Posterior cingulate gyrus (tissue), 11 donors: ENCODE measurements at regions of chr17 and their contacts with region 1.

Region 1: GRCh38 chr17:39754161-39754951 is 16.6 kb downstream of the GRB7 start:
- DNase-seq: peak; percentile 73 to 98 (median 86)

Region 2: DNA sequence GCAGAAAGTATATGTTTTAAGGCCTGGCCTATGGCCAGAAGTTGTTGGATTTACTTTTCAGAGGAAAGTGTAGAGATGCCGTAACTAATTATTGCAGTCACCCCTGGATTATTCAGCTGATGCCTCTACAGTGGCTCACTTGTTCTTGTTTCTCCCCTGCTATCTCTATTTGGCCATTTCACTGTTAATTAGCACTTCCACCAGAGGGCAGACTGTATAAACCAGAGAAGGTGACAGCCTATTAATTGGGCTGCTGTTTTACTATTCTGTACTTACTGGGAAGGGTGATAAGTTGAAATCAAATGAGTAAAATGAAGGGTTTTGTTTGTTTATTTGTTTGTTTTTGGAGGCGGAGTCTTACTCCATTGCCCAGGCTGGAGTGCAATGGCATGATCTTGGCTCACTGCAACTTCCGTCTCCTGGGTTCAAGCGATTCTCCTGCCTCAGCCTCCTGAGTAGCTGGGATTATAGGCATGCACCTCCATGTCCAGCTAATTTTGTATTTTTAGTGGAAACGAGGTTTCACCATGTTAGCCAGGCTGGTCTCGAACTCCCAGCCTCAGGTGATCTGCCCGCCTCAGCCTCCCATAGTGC is 227.0 kb before region 1 on chr17:
- intact Hi-C with region 1: loop called (anchors 5 kb)
- DNase-seq: no peak

Region 3: DNA sequence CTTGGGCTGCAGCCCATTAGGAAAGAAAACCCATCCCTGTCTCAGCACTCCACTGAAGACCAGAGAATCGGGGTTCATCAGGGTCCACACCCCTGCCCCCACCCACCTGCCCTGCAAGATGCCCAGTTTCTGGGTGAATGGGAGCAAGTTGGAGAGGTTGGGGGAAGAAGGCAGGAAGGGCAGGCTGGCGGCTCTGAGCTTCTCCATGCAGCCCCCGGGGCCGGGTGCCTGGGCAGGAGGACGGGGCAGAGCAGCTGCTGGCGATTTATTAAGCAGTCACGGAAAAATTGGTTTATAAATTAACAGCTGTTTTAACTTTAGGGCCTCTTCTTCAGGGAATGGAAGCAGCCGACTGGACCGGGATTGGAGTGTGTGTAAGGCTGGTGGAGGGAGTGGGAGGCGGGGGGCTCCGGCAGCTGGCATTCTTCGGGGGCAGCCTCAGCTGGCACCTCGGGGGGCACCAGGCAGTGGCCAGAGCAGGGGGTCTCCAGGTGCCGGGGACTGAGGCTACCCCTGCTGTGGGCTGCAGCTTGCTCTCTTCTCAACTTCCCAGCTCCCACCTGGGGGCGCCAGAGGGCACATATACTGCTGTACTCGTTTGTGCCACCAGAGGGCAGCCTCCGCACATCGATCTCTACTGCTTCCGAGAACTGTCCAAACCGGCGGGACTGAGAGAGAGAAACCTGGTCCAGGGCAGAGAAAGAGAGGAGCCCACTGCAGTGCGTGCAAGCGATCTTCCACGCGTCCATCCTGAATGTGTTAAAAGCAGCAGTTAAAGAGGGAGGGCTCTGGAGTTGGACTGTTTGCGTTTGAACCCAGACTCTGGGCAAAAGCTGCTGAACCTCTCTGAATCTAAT is 132.6 kb before region 1 on chr17:
- intact Hi-C with region 1: loop called (anchors 2 kb)
- DNase-seq: peak; percentile 84 to 98 (median 92)

Region 4: DNA sequence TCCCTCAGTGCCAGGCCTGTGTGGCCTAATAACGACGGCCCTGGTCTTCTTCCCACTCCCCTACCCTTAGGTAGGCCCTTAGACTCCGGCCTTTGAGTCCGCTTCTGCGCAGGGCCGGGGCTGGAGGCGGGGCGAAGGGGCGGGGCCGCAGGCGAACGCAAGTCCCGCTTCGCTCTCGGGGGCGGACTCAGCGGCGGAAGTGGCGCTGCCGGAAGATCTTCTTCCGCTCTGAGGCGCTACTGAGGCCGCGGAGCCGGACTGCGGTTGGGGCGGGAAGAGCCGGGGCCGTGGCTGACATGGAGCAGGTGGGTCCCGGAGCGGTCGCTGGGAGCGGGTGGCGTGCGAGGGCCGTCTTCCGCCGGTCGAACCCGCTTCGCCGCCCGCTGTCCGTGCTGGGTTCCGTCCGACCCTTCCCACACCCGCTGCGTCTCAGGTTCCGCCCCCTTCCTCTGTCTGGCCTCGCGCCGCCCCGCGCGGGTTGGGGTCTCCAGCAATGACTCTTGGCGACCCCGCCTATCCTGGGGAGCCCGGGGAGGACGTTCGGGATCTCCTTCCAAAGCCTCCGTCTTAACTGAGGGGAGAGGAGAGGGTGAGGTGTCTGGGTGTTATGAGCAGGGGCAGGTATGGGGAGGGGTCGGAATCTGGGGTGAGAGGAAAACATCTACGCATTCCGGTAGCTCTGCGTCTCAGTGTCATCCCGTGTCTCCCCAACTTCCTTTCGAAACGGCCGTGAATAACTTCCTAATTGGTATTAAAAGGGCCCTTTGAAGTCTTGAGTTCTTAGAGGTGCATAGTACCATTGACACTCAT is 117.2 kb before region 1 on chr17 and contains the start of gene STARD3:
- intact Hi-C with region 1: loop called (anchors 5 kb)
- DNase-seq: peak; percentile 87 to 99 (median 93)

Region 5: DNA sequence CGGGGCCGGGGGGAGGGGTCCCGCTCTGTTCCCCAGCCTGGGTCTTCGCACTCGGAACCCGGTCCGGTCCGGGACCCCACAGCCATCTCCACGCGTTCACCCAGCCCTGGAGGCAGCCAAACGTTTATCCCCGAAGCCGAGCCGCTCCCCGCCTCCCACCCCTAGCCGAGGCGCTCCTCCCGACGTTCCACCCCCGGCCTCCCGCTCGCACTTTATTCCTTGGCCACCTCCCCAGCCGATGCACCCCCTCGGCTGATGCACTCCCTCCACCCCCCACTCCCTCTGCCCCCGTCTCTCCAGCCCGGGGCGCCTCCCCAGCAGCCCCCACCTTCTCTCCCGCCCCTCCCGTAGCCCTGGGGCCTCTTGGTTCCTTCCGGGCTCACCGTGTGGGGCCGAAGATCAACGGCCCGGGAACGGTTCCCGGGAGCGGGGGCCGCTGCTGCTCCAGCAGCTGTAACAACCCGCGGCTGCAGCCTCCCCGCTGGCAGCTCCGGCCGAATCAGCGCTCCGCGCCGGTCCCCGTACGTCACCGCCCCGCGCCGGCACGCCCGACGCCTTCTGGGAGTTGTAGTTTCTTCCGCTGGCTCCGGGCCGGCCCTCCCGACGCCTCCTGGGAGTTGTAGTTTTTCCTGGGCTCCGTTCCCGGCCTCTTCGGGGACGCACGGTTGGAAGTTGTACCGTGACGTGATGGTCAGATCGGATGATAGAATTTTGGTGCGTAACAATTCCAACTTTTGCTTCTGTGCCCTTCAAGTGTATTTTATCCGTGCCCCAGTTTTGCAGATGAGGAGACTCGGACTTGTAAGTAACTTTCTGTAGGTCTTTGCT is 173.0 kb after region 1 on chr17 and contains the starts of genes LRRC3C and ORMDL3:
- intact Hi-C with region 1: loop called (anchors 10 kb)
- DNase-seq: peak; percentile 87 to 99 (median 92)